ENCODE measurements at regions of chrX and their contacts with region 1.

Region 1: GRCh38 chrX:97563531-97564133 is 679.9 kb downstream of the RPA4 start:
- DNase-seq: peak; percentile 79

Region 2: DNA sequence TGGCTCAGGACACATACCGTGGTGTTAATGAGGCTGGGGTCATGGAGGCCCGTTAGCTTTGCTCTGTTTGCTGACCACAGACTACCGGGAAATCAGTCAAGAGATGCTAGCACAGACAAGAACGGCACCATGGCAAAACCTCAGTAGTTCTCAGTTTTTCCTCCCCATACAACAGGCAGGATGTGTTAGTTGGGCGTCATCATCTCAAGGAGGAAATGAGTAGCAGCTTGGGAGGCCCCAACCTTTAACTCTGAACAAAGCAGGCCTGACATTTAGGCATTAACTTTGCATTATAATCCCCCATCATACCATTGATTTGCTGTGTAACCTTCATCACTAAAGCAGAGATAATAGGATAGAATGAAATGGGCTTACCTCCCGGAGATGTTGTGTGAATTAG is 34.3 kb after region 1 on chrX:
- intact Hi-C with region 1: loop called in 1 of 2 experiments (anchors 2 kb)
- DNase-seq: no peak